CD4-positive, alpha-beta T cell (primary cell): ENCODE measurements at regions of chr2 and their contacts with region 1.

Region 1: GRCh38 chr2:27133905-27134780 is at the start of gene PREB:
- DNase-seq: peak; percentile 94 to 99 (median 98)
- ATAC-seq: peak; percentile 97
- H3K4me3 ChIP-seq: peak within 1 kb of the TSS; percentile 90
- H3K4me3 Mint-ChIP-seq: peak within 1 kb of the TSS; percentile 98
- H3K27ac ChIP-seq: peak within 1 kb of the TSS; percentile 55 to 79
- H3K27ac Mint-ChIP-seq: peak within 1 kb of the TSS; percentile 94
- H3K4me1 ChIP-seq: peaks cover 30% of the 10 kb centered on the region
- H3K4me1 Mint-ChIP-seq: peaks cover 19% of the 10 kb centered on the region
- H3K27me3 ChIP-seq: no peaks in the 10 kb centered on the region
- H3K27me3 Mint-ChIP-seq: no peaks in the 10 kb centered on the region
- CTCF ChIP-seq: no peak
- total RNA-seq, gene PREB: 12.3 to 12.6 TPM

Region 2: GRCh38 chr2:27032495-27033252 is 101.5 kb before region 1 on chr2 and contains the start of gene TMEM214:
- CTCF ChIA-PET with region 1: no interaction called
- POLR2A ChIA-PET with region 1: no interaction called
- intact Hi-C with region 1: loop called in 1 of 2 experiments (anchors 2 kb)
- DNase-seq: peak; percentile 55 to 86 (median 74)
- ATAC-seq: peak; percentile 94
- H3K4me3 ChIP-seq: peak within 1 kb of the TSS; percentile 92
- H3K4me3 Mint-ChIP-seq: peak within 1 kb of the TSS; percentile 96
- H3K27ac ChIP-seq: peak within 1 kb of the TSS; percentile 64 to 73
- H3K27ac Mint-ChIP-seq: peak within 1 kb of the TSS; percentile 83
- H3K4me1 ChIP-seq: peaks cover 36% of the 10 kb centered on the region
- H3K4me1 Mint-ChIP-seq: peaks cover 45% of the 10 kb centered on the region
- H3K27me3 ChIP-seq: no peaks in the 10 kb centered on the region
- H3K27me3 Mint-ChIP-seq: no peaks in the 10 kb centered on the region
- CTCF ChIP-seq: no peak
- total RNA-seq, gene TMEM214: 22.0 to 24.6 TPM

Region 3: GRCh38 chr2:27071277-27071989 is 62.7 kb before region 1 on chr2 and contains the start of gene OST4:
- CTCF ChIA-PET with region 1: no interaction called
- POLR2A ChIA-PET with region 1: interaction called, 13 read pairs
- intact Hi-C with region 1: loop called in 1 of 2 experiments (anchors 5 kb)
- DNase-seq: peak; percentile 76 to 95 (median 86)
- ATAC-seq: peak; percentile 86
- H3K4me3 ChIP-seq: peak within 1 kb of the TSS; percentile 99
- H3K4me3 Mint-ChIP-seq: peak within 1 kb of the TSS; percentile 99
- H3K27ac ChIP-seq: peak within 1 kb of the TSS; percentile 90 to 91
- H3K27ac Mint-ChIP-seq: peak within 1 kb of the TSS; percentile 98
- H3K4me1 ChIP-seq: peaks cover 74% of the 10 kb centered on the region
- H3K4me1 Mint-ChIP-seq: peaks cover 84% of the 10 kb centered on the region
- H3K27me3 ChIP-seq: no peaks in the 10 kb centered on the region
- H3K27me3 Mint-ChIP-seq: no peaks in the 10 kb centered on the region
- CTCF ChIP-seq: no peak
- total RNA-seq, gene OST4: 232 to 254 TPM

Region 4: GRCh38 chr2:27086090-27086723 is 47.9 kb before region 1 on chr2:
- CTCF ChIA-PET with region 1: interaction called, 3 read pairs
- POLR2A ChIA-PET with region 1: interaction called, 4 read pairs
- intact Hi-C with region 1: loop called in 1 of 2 experiments (anchors 1 kb)
- DNase-seq: peak; percentile 91 to 99 (median 98)
- ATAC-seq: peak; percentile 92
- H3K4me3 ChIP-seq: peak overlapping the region; percentile 70
- H3K4me3 Mint-ChIP-seq: peak overlapping the region; percentile 91
- H3K27ac ChIP-seq: peak overlapping the region; percentile 65 to 70
- H3K27ac Mint-ChIP-seq: peak overlapping the region; percentile 81
- H3K4me1 ChIP-seq: peaks cover 50% of the 10 kb centered on the region
- H3K4me1 Mint-ChIP-seq: peaks cover 32% of the 10 kb centered on the region
- H3K27me3 ChIP-seq: no peaks in the 10 kb centered on the region
- H3K27me3 Mint-ChIP-seq: no peaks in the 10 kb centered on the region
- CTCF ChIP-seq: peak; percentile 75

Region 5: GRCh38 chr2:27123302-27124231 is 10.6 kb before region 1 on chr2 and contains the start of gene ABHD1:
- CTCF ChIA-PET with region 1: interaction called, 8 read pairs
- POLR2A ChIA-PET with region 1: interaction called, 56 read pairs
- intact Hi-C with region 1: loop called (anchors 1 kb)
- DNase-seq: peak; percentile 23 to 86 (median 58)
- ATAC-seq: peak; percentile 79
- H3K4me3 ChIP-seq: peak within 1 kb of the TSS; percentile 78
- H3K4me3 Mint-ChIP-seq: peak within 1 kb of the TSS; percentile 92
- H3K27ac ChIP-seq: peak within 1 kb of the TSS in 1 of 2 donors; percentile 52
- H3K27ac Mint-ChIP-seq: peak within 1 kb of the TSS; percentile 81
- H3K4me1 ChIP-seq: peaks cover 22% of the 10 kb centered on the region
- H3K4me1 Mint-ChIP-seq: peaks cover 18% of the 10 kb centered on the region
- H3K27me3 ChIP-seq: peaks cover under 1 to 6% of the 10 kb centered on the region in 2 experiments
- H3K27me3 Mint-ChIP-seq: peaks cover 19% of the 10 kb centered on the region
- CTCF ChIP-seq: no peak
- total RNA-seq, gene ABHD1: 1.0 to 1.3 TPM

Region 6: DNA sequence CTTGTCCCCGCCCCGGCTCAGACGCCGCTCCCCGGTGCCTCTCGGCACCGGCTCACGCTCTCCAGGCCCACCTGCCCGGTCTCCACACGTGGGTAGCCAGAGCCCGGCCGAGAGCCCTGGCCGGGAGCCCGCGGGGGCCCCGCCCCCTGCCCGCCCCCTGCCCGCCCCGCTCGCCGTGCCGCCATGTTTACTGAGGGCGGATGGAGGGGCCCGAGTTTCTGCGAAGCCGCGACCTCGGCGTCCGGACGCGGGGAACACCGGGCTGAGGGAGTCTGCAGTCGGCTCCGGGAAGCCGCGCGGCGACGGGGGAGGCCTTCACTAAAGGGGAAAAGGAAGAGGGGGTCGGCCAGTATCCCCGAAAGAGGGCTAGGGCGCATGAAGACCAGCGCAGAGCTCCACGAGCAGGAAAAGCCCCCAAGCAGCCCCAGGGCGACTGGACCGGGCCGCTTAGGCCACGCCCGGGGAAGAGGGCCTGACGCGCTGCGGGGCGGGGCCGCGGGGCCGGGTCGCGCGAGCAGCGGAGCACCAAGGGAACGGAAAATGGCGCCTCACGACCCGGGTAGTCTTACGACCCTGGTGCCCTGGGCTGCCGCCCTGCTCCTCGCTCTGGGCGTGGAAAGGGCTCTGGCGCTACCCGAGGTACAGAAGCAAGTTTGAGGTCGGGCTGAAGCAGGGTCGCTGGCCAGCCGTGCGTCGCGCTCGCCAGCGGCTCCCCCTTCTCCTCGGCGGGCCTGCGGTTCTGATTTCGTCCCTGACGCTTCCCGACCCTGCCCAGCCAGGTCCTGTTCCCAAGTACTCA is 77.9 kb after region 1 on chr2 and contains the starts of genes ATRAID and SLC5A6:
- CTCF ChIA-PET with region 1: no interaction called
- POLR2A ChIA-PET with region 1: interaction called, 6 read pairs
- intact Hi-C with region 1: loop called (anchors 1 to 2 kb)
- DNase-seq: peak; percentile 76 to 95 (median 86)
- ATAC-seq: peak; percentile 83
- H3K4me3 ChIP-seq: peak within 1 kb of the TSS; percentile 78
- H3K4me3 Mint-ChIP-seq: peak within 1 kb of the TSS; percentile 98
- H3K27ac ChIP-seq: peak within 1 kb of the TSS; percentile 96 to 97
- H3K27ac Mint-ChIP-seq: peak within 1 kb of the TSS; percentile 98
- H3K4me1 ChIP-seq: peaks cover 26% of the 10 kb centered on the region
- H3K4me1 Mint-ChIP-seq: peaks cover 40% of the 10 kb centered on the region
- H3K27me3 ChIP-seq: no peaks in the 10 kb centered on the region
- H3K27me3 Mint-ChIP-seq: no peaks in the 10 kb centered on the region
- CTCF ChIP-seq: no peak
- total RNA-seq, gene ATRAID: 79.1 to 82.5 TPM
- total RNA-seq, gene SLC5A6: 196 to 207 TPM

Region 7: GRCh38 chr2:27380626-27381545 is 246.7 kb after region 1 on chr2 and contains the start of gene ZNF513:
- CTCF ChIA-PET with region 1: no interaction called
- POLR2A ChIA-PET with region 1: no interaction called
- intact Hi-C with region 1: loop called in 1 of 2 experiments (anchors 5 kb)
- DNase-seq: peak; percentile 75 to 94 (median 86)
- ATAC-seq: peak; percentile 92
- H3K4me3 ChIP-seq: peak within 1 kb of the TSS; percentile 66
- H3K4me3 Mint-ChIP-seq: peak within 1 kb of the TSS; percentile 93
- H3K27ac ChIP-seq: peak within 1 kb of the TSS; percentile 80 to 86
- H3K27ac Mint-ChIP-seq: peak within 1 kb of the TSS; percentile 91
- H3K4me1 ChIP-seq: peaks cover 18% of the 10 kb centered on the region
- H3K4me1 Mint-ChIP-seq: peaks cover 32% of the 10 kb centered on the region
- H3K27me3 ChIP-seq: no peaks in the 10 kb centered on the region
- H3K27me3 Mint-ChIP-seq: no peaks in the 10 kb centered on the region
- CTCF ChIP-seq: no peak
- total RNA-seq, gene ZNF513: 22.8 to 22.9 TPM

Region 8: DNA sequence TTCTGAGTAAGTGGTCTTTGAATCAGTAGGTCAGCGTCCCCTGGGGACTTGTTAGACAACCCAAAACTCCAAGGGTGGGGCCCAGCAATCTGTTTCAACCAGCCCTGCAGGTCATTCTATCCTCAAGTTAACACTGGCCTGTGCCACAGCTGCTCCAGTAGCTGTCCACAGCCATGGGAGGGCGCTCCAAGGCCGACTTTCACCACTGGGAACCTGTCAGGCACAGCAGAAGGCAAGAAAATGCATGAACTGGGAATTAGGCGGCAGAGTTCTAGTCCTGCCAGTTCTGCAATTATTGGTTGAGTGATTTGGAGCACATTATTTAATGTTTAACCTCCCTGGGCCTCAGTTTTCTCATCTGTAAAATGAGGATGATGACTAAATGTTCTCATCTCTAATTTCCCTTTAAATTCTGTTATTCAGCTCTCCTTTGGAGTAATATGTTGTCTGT is 620.0 kb after region 1 on chr2:
- CTCF ChIA-PET with region 1: no interaction called
- POLR2A ChIA-PET with region 1: no interaction called
- intact Hi-C with region 1: no loop called
- DNase-seq: peak; percentile 54 to 76 (median 64)
- ATAC-seq: peak; percentile 71
- H3K4me3 ChIP-seq: no peak overlapping the region
- H3K4me3 Mint-ChIP-seq: no peak overlapping the region
- H3K27ac ChIP-seq: no peak overlapping the region
- H3K27ac Mint-ChIP-seq: no peak overlapping the region
- H3K4me1 ChIP-seq: peaks cover 2% of the 10 kb centered on the region
- H3K4me1 Mint-ChIP-seq: no peaks in the 10 kb centered on the region
- H3K27me3 ChIP-seq: peaks cover 2 to 14% of the 10 kb centered on the region in 2 experiments
- H3K27me3 Mint-ChIP-seq: peaks cover 3% of the 10 kb centered on the region
- CTCF ChIP-seq: peak; percentile 46